ENCODE measurements at regions of chr11 and their contacts with region 1.

Region 1: DNA sequence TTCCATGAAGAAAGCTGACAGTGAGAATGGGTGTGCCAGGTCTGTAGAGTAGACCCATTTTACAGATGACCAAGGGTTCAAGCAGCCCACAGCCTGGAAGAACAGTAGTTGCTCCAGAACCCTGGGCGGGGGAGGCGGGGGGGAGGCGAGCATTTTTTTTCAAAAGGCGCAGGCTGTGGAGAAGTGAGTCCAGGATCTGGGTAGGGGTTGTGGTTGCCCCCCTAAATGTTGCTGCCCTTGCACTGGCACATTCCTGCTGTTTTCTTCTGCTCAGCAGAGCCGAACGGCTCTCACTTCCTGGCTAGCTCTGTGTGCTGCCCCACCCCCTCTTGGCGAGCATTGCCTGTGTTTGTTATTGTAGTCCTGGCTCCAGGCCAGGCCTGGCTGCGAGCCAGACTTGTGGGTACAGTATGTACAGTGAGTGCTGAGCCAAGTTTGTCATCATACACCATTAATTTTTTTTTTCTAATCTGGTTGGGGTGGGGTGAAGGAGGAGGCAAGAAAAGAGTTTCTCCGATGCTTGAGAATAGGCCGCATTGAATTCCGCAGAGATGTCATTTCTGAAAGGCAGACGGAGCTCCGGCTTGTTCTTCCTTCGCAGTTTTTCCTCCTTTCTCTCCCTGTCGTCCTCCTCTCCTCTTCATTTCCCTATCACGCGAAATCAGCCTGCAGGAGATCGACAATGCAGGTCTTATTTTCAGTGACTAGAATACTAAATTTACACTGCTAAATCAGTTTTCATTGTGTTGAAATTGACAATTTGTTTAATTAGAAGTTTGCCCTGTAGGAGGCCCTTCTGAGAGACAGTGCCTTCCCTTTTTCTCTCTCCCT is 100.5 kb downstream of the ZBTB16 start:
- DNase-seq: peak; percentile 100
- ATAC-seq: peak; percentile 72

Region 2: GRCh38 chr11:113896156-113896879 is 263.7 kb before region 1 on chr11:
- intact Hi-C with region 1: no loop called
- DNase-seq: peak; percentile 53
- ATAC-seq: peak; percentile 84

Region 3: DNA sequence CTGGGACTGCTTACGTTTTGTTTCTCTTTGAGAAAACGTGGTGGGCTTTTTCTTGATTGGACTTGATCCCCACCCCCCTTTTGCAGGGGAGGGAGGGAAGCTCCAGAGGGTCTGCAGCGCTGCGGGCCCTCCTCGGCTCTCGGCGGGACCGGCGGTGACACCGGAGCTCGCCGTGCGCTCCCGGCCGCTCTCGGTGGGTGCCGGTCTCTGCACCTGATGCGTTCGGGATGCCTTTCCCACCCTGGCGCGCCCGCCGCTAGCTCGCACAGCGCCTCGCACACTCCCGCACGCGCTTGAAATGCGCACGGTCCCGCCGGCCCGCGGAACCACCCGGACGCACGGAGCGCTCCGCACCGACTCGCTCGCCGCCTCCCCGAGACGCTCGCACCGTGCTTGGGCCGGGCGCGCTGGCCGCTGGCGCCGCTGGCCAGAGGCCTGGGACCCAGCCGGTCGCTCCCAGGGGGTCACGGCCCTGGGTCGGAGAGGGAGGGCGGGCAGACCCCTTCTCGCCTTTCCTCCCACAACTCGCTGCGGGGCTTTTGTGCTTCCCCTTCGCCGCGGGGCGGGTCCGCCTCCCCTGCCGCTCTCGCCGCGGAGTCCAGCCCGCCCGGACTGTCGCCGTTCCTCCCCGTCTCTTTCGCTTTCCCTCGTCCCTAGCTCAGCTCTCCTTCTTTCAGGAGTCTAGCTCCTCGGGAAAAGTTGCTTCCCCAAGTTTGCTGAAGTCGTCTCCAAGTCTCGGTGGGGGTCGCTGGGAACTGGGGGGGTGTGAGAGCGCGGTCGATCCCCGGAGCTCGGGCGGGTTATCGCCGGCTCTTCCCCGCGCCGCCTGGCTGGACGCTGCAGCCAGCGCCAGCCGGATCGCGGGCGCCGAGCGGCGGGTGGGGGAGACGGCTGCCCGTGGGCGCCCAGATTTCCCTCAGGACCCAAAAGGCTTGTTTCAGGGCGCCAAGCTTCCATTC is 99.3 kb before region 1 on chr11:
- intact Hi-C with region 1: loop called (anchors 5 kb)
- DNase-seq: peak; percentile 69
- ATAC-seq: peak; percentile 11

Region 4: GRCh38 chr11:114262681-114263512 is 102.9 kb after region 1 on chr11:
- intact Hi-C with region 1: no loop called
- DNase-seq: no peak
- ATAC-seq: peak; percentile 27